Activated naive CD4-positive, alpha-beta T cell treated with anti-CD3 and anti-CD28 coated beads for 36 hours (primary cell): ENCODE measurements at regions of chr7 and their contacts with region 1.

Region 1: DNA sequence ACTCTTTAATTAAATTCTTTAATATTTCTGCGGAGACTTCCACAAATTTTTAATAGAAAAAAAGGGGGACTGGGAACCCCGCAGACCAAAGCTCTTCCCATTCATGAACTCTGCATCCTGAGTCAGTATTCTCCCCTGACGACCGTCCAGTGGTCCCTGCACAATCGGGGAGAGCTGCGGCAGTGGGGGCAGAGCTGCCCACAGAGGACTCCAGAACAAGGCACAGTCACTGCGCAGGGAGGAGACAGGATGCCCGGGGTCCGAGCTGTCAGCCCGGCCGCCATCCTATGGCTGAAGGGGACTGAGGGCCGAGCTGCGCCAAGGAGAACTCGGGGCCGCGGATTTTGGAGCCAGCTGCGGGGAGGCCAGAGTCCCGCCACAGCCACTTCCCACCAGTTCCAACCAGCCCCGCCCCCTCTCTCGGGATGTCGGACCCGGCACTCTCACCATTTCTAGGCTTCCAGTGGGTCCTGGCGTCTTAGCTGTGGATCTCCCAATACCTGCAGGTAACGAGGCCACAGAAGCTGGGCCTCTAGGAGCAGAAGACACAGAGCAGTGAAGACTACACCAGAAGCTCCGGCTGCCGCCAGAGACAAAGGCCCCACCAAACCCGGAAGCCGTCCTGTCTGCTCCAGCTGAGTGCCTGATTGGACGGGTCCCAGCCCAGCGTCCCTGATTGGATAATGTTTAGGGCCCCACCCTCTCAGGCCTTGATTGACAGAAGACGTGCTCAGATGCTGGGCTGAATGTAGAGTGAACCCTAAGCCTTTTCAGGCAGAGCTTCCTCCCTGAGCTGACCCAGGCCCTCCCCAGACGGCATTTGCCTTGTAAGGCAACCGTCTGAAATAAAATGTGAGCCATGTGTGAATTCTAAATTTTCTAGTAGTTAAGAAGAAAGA is at the start of gene ERV3-1:
- DNase-seq: peak; percentile 97
- H3K4me3 Mint-ChIP-seq: peak within 1 kb of the TSS; percentile 93
- H3K27ac Mint-ChIP-seq: peak within 1 kb of the TSS; percentile 85
- H3K4me1 Mint-ChIP-seq: peaks cover 28% of the 10 kb centered on the region
- H3K27me3 Mint-ChIP-seq: no peaks in the 10 kb centered on the region
- total RNA-seq, gene ERV3-1: 8.9 to 10.6 TPM

Region 2: DNA sequence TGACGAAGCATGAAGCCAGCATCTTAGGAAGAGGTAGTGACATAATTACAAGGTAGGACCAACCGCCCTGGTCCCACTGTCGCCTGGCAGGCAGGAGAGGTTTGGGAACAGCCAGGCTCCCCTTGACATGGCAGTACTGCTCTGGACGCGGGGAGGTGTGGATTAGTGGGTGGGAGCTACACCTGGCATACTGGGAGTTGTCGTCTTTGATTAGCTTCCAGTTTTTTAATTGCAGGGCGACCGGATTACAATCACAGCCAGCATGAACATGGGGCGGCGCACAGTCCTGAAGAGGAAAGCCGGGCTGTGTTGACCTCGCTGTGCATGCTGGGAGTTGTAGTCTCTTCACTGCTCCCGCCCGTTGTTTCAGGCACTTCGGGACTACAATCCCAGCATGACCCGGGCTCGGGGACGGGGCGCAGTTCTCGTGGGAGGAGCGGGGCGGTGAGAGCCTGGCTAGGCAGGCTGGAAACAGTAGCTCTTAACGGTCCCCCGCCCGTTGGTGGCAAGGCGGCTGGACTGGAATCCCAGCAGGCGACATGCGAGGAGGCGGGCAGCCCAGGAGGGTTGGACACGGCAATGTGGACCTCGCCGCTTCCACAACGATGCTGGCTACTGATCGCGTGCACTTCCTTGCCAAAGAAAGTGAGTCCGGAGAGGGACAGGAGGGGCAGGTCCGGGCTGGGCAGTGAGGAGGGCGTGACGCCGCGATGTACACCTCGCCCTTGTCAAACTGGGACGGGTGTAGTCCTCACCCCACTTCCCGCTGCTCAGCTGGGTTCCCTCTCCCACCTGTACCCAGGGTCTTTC is 1105.7 kb before region 1 on chr7:
- CTCF ChIA-PET with region 1: no interaction called
- intact Hi-C with region 1: loop called (anchors 1 kb)
- DNase-seq: peak; percentile 95
- H3K4me3 Mint-ChIP-seq: peak overlapping the region; percentile 93
- H3K27ac Mint-ChIP-seq: peak overlapping the region; percentile 77
- H3K4me1 Mint-ChIP-seq: peaks cover 8% of the 10 kb centered on the region
- H3K27me3 Mint-ChIP-seq: no peaks in the 10 kb centered on the region

Region 3: GRCh38 chr7:64313740-64314491 is 692.4 kb before region 1 on chr7 and contains the start of gene ZNF736:
- CTCF ChIA-PET with region 1: no interaction called
- intact Hi-C with region 1: loop called (anchors 2 kb)
- DNase-seq: peak; percentile 94
- H3K4me3 Mint-ChIP-seq: peak within 1 kb of the TSS; percentile 99
- H3K27ac Mint-ChIP-seq: peak within 1 kb of the TSS; percentile 97
- H3K4me1 Mint-ChIP-seq: peaks cover 35% of the 10 kb centered on the region
- H3K27me3 Mint-ChIP-seq: no peaks in the 10 kb centered on the region
- total RNA-seq, gene ZNF736: 22.7 to 24.0 TPM

Region 4: DNA sequence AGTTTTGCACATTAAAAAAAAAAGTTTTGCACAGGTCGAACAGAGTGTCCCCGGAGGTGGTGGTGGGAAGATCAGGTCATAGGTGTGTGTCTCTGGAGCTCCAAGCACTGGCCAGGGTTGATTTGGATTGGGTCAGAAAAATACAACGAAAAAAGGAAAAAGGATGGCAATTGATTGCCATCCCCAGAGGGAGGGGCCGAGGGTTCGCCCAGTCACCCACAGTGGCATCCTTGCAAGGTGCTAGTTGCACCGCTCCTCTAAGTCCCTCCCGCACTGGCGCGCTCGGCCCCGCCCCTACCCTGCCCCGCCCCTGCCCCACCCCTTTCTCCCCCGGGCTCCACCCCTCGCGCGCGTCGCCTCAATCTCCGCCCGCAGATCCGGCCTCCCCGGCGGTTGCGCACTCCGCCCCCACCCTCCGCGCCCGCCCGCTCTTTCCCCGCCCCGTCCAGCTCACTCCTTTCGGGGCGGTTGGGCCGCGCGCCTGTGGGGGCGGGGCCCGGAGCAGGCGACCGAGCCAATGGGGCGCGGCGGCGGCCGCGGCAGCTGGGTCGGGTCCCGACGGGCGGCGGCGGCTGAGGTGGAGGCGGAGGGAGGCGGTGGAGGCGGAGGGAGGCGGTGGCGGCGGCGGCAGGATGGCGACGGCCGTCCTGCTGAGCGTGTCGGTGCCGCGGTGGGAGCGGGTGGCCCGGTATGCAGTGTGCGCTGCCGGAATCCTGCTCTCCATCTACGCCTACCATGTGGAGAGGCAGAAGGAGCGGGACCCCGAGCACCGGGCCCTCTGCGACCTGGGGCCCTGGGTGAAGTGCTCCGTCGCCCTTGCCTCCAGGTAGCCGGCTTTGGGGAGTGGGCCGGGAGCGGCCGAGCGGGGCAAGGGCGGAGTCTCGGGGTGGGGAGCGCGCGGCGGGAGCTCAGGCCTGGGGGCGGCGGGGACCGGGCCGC is 31.7 kb after region 1 on chr7:
- CTCF ChIA-PET with region 1: interaction called, 4 read pairs
- intact Hi-C with region 1: loop called (anchors 1 kb)
- DNase-seq: peak; percentile 93
- H3K4me3 Mint-ChIP-seq: peak overlapping the region; percentile 73
- H3K27ac Mint-ChIP-seq: no peak overlapping the region
- H3K4me1 Mint-ChIP-seq: peaks cover 11% of the 10 kb centered on the region
- H3K27me3 Mint-ChIP-seq: no peaks in the 10 kb centered on the region

Region 5: GRCh38 chr7:65295409-65295808 is 289.1 kb after region 1 on chr7:
- CTCF ChIA-PET with region 1: no interaction called
- intact Hi-C with region 1: no loop called
- DNase-seq: no peak
- H3K4me3 Mint-ChIP-seq: no peak overlapping the region
- H3K27ac Mint-ChIP-seq: no peak overlapping the region
- H3K4me1 Mint-ChIP-seq: peaks cover 3% of the 10 kb centered on the region
- H3K27me3 Mint-ChIP-seq: no peaks in the 10 kb centered on the region